H1 (cell line): ENCODE measurements at regions of chr11 and their contacts with region 1.

Region 1: GRCh38 chr11:17978553-17979287 is 34.1 kb downstream of the SERGEF start:
- DNase-seq: peak in 1 of 2 experiments; percentile 71
- H3K4me3 ChIP-seq: no peak overlapping the region
- H3K27ac ChIP-seq: no peak overlapping the region
- H3K4me1 ChIP-seq: no peaks in the 10 kb centered on the region
- H3K27me3 ChIP-seq: no peaks in the 10 kb centered on the region
- CTCF ChIP-seq: peak; percentile 91 to 97 (median 94)
- EP300 ChIP-seq: no peak
- POLR2A ChIP-seq: no peak
- RAD21 ChIP-seq: peak; percentile 77 to 79

Region 2: GRCh38 chr11:17743808-17744119 is 235.0 kb before region 1 on chr11:
- CTCF ChIA-PET with region 1: interaction called, 276 read pairs
- POLR2A ChIA-PET with region 1: no interaction called
- DNase-seq: no peak
- H3K4me3 ChIP-seq: no peak overlapping the region
- H3K27ac ChIP-seq: no peak overlapping the region
- H3K4me1 ChIP-seq: peaks cover 0 to 7% (median 3%) of the 10 kb centered on the region in 4 experiments; a peak in 6 of 7 replicates
- H3K27me3 ChIP-seq: peaks cover 0 to 6% (median 2%) of the 10 kb centered on the region in 4 experiments; a peak in 5 of 7 replicates
- CTCF ChIP-seq: no peak
- EP300 ChIP-seq: no peak
- POLR2A ChIP-seq: no peak
- RAD21 ChIP-seq: no peak

Region 3: GRCh38 chr11:17760102-17761029 is 218.4 kb before region 1 on chr11:
- CTCF ChIA-PET with region 1: interaction called, 76 read pairs
- POLR2A ChIA-PET with region 1: no interaction called
- DNase-seq: peak; percentile 77 to 84
- H3K4me3 ChIP-seq: no peak overlapping the region
- H3K27ac ChIP-seq: no peak overlapping the region
- H3K4me1 ChIP-seq: peaks cover 0 to 7% (median 1%) of the 10 kb centered on the region in 4 experiments; a peak in 3 of 7 replicates
- H3K27me3 ChIP-seq: no peaks in the 10 kb centered on the region
- CTCF ChIP-seq: peak; percentile 89 to 97 (median 91)
- EP300 ChIP-seq: no peak
- POLR2A ChIP-seq: no peak
- RAD21 ChIP-seq: peak; percentile 95 to 96

Region 4: DNA sequence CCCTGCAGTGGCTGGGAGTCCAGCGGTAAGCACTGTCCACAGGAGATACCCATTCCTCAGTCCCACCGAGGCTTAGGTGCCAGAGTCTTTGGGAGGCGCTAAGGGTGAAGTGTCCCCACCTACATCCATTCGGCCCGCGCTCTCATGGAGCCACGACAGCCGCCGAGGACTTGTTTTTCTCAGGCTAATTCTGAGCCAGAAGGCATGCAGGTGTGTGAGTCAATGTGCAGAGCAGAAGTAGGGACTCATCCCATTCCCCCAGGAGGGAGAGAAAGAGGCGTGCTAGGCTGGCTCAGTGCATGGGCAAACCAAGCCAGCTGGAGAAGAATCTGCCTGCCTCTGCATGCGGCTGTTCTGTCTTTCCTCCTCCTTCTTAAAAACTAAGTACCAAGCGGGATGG is 197.5 kb before region 1 on chr11:
- CTCF ChIA-PET with region 1: interaction called, 13 read pairs
- POLR2A ChIA-PET with region 1: no interaction called
- DNase-seq: no peak
- H3K4me3 ChIP-seq: no peak overlapping the region
- H3K27ac ChIP-seq: no peak overlapping the region
- H3K4me1 ChIP-seq: no peaks in the 10 kb centered on the region
- H3K27me3 ChIP-seq: no peaks in the 10 kb centered on the region
- CTCF ChIP-seq: no peak
- EP300 ChIP-seq: no peak
- POLR2A ChIP-seq: no peak
- RAD21 ChIP-seq: no peak

Region 5: DNA sequence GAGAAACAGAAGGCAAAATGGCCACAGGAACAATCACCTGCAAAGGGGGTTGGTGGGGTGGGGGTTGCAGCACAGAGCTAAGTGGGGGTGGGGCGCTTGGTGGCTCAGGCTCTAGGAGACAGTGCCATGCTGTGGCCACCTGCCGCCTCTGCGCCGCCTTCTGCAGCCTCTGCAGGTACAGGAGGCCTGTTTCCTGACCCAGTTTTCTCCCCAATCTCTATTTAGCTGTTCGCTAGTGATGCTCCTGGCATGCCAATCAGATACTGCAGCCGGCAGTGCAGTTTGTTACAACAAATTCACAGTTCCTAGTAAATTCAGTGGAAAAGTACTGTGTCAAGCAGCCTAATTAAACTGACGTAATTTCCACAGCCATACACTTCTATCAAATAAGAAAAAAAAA is 72.3 kb before region 1 on chr11:
- CTCF ChIA-PET with region 1: interaction called, 13 read pairs
- POLR2A ChIA-PET with region 1: no interaction called
- DNase-seq: peak; percentile 70 to 73
- H3K4me3 ChIP-seq: peak overlapping the region in 1 of 4 experiments; percentile 20; a peak in 1 of 8 replicates
- H3K27ac ChIP-seq: no peak overlapping the region
- H3K4me1 ChIP-seq: peaks cover 4 to 10% (median 6%) of the 10 kb centered on the region in 4 experiments; a peak in 6 of 7 replicates
- H3K27me3 ChIP-seq: no peaks in the 10 kb centered on the region
- CTCF ChIP-seq: peak; percentile 62 to 86 (median 67)
- EP300 ChIP-seq: no peak
- POLR2A ChIP-seq: no peak
- RAD21 ChIP-seq: peak; percentile 74 to 79

Region 6: GRCh38 chr11:17960091-17960490 is 18.6 kb before region 1 on chr11:
- CTCF ChIA-PET with region 1: interaction called, 97 read pairs
- POLR2A ChIA-PET with region 1: interaction called, 3 read pairs
- DNase-seq: no peak
- H3K4me3 ChIP-seq: no peak overlapping the region
- H3K27ac ChIP-seq: no peak overlapping the region
- H3K4me1 ChIP-seq: no peaks in the 10 kb centered on the region
- H3K27me3 ChIP-seq: no peaks in the 10 kb centered on the region
- CTCF ChIP-seq: no peak
- EP300 ChIP-seq: no peak
- POLR2A ChIP-seq: no peak
- RAD21 ChIP-seq: no peak

Region 7: GRCh38 chr11:17991783-17992433 is 13.2 kb after region 1 on chr11:
- CTCF ChIA-PET with region 1: interaction called, 37 read pairs
- POLR2A ChIA-PET with region 1: no interaction called
- DNase-seq: no peak
- H3K4me3 ChIP-seq: no peak overlapping the region
- H3K27ac ChIP-seq: no peak overlapping the region
- H3K4me1 ChIP-seq: no peaks in the 10 kb centered on the region
- H3K27me3 ChIP-seq: no peaks in the 10 kb centered on the region
- CTCF ChIP-seq: peak in 2 of 3 experiments; percentile 55 to 71; a peak in 3 of 4 replicates
- EP300 ChIP-seq: no peak
- POLR2A ChIP-seq: no peak
- RAD21 ChIP-seq: peak; percentile 57 to 67